WTC11 (cell line): ENCODE measurements at regions of chr10 and their contacts with region 1.

Region 1: GRCh38 chr10:25113191-25114035 is 61.4 kb upstream of the GPR158 start:
- DNase-seq: peak; percentile 82
- ATAC-seq: peak; percentile 98
- H3K4me3 Mint-ChIP-seq: no peak overlapping the region
- H3K27ac Mint-ChIP-seq: no peak overlapping the region
- H3K4me1 Mint-ChIP-seq: peaks cover 32% of the 10 kb centered on the region
- H3K27me3 Mint-ChIP-seq: no peaks in the 10 kb centered on the region; the same call in 1 of the 2 replicates
- CTCF ChIP-seq: peak; percentile 73

Region 2: DNA sequence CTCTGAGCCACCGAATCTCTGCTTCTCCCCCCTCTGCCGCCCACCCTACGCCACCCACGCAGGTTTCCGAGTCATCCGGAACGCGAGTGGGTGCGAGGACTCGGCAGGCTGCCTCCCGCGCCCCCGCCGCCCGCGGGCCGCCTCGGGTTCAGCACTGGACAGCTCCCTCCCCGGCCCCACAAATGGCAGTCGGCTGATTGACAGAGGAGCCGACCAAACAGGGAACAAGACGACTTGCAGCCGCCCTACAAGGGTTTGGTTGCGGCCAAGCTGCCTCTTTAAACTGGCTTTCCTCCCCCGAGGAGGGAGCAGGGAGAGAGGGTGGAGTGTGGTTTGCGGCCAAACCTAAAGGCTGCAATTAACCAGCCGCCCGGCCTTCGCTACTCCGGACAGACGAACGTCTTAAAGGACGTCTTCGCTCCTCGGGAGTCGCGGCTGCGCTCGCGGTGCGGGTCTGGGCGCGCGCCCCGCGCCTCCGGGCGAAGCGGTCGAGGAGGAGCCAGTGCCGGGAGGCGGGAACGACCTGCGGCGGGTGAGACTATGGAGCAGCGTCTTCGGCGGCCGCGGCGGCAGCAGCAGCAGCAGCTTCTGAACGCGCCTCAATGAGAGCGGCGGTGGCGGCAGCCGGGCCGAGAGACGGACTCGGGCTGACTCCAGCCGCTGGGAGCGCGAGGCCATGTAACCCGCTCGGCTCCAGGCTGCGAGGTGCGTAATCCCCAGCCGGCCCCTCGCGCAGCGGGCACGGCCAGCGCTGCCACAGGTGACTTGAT is 61.2 kb after region 1 on chr10 and contains the start of gene GPR158:
- CTCF ChIA-PET with region 1: interaction called, 17 read pairs
- POLR2A ChIA-PET with region 1: no interaction called
- DNase-seq: peak; percentile 89
- ATAC-seq: peak; percentile 83
- H3K4me3 Mint-ChIP-seq: peak within 1 kb of the TSS; percentile 84
- H3K27ac Mint-ChIP-seq: no peak within 1 kb of the TSS
- H3K4me1 Mint-ChIP-seq: peaks cover 17% of the 10 kb centered on the region
- H3K27me3 Mint-ChIP-seq: peaks cover 60% of the 10 kb centered on the region
- CTCF ChIP-seq: no peak
- total RNA-seq, gene GPR158: 0.34 to 0.63 TPM (median 0.44 TPM) in 3 replicates

Region 3: DNA sequence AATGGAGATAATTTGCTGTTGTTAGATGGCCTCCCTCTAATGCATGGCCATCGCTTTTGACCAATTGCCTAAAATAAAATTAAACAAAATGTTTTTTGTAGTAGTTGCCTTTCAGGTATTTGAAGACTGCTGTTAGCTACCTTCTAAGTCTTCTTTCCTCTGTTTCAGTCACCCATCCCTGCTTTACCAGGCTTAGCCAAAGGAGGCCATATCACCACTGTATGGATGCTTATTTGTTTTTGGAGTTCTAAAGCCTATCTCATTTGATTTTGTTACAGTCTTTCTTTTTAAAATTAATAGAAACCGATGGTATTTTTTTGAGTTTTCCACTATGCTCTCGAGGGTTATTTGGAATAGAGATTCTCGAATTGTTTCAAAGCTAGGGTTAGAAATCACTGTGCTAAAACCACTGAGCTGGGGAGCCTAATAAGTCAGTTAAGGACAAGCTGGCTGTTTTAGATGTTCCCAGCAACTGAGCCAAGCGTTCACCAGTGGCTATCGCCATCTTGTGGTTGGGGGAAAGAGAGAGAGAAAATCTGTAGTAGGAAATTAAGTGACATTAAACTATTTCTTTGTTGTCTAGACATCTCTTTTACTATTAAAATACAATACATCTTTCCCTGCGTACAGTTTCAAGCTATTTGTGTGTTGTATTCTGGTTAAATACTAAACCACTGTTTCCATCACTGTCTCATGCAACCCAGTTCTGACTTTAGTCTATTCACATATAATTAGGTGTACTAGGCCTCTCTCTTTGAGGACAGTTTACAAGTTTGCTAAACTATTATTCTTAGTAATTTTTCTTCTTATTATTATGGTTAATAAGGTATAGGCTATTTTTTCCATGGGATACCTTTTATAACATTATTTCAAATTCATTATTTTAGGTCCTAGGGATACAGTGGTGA is 113.6 kb after region 1 on chr10:
- CTCF ChIA-PET with region 1: interaction called, 34 read pairs
- POLR2A ChIA-PET with region 1: interaction called, 3 read pairs
- DNase-seq: peak; percentile 41
- ATAC-seq: peak; percentile 83
- H3K4me3 Mint-ChIP-seq: no peak overlapping the region
- H3K27ac Mint-ChIP-seq: no peak overlapping the region
- H3K4me1 Mint-ChIP-seq: no peaks in the 10 kb centered on the region
- H3K27me3 Mint-ChIP-seq: no peaks in the 10 kb centered on the region
- CTCF ChIP-seq: no peak; the same call in 1 of the 2 replicates